IMR-90 (cell line): ENCODE measurements at regions of chr4 and their contacts with region 1.

Region 1: GRCh38 chr4:137531986-137532868 is at the start of gene PCDH18:
- DNase-seq: peak; percentile 98
- ATAC-seq: peak; percentile 83
- H3K4me3 ChIP-seq: peak within 1 kb of the TSS; percentile 62
- H3K27ac ChIP-seq: peak within 1 kb of the TSS; percentile 87
- H3K4me1 ChIP-seq: no peaks in the 10 kb centered on the region; the same call in 1 of the 2 replicates
- H3K27me3 ChIP-seq: no peaks in the 10 kb centered on the region
- CTCF ChIP-seq: no peak
- POLR2A ChIP-seq: peak; percentile 79
- RAD21 ChIP-seq: no peak; the same call in 1 of the 2 replicates
- total RNA-seq, gene PCDH18: 108 and 119 TPM in 2 replicates

Region 2: GRCh38 chr4:137124278-137124932 is 407.8 kb before region 1 on chr4:
- CTCF ChIA-PET with region 1: interaction called, 8 read pairs
- POLR2A ChIA-PET with region 1: no interaction called
- dilution Hi-C with region 1: no loop called
- in situ Hi-C with region 1: loop called (anchors 10 kb)
- intact Hi-C with region 1: loop called (anchors 1 kb)
- DNase-seq: peak; percentile 79
- ATAC-seq: peak; percentile 100
- H3K4me3 ChIP-seq: peak overlapping the region; percentile 44; the same call in 1 of the 2 replicates
- H3K27ac ChIP-seq: no peak overlapping the region
- H3K4me1 ChIP-seq: no peaks in the 10 kb centered on the region
- H3K27me3 ChIP-seq: no peaks in the 10 kb centered on the region
- CTCF ChIP-seq: peak; percentile 79
- POLR2A ChIP-seq: no peak
- RAD21 ChIP-seq: peak; percentile 88

Region 3: GRCh38 chr4:137610960-137611359 is 78.7 kb after region 1 on chr4:
- CTCF ChIA-PET with region 1: no interaction called
- POLR2A ChIA-PET with region 1: interaction called, 9 read pairs
- dilution Hi-C with region 1: no loop called
- in situ Hi-C with region 1: no loop called
- intact Hi-C with region 1: loop called (anchors 1 kb)
- DNase-seq: peak; percentile 19
- ATAC-seq: no peak
- H3K4me3 ChIP-seq: no peak overlapping the region
- H3K27ac ChIP-seq: peak overlapping the region; percentile 47; the same call in 1 of the 2 replicates
- H3K4me1 ChIP-seq: peaks cover 9% of the 10 kb centered on the region
- H3K27me3 ChIP-seq: no peaks in the 10 kb centered on the region
- CTCF ChIP-seq: peak; percentile 32; the same call in 1 of the 2 replicates
- POLR2A ChIP-seq: no peak
- RAD21 ChIP-seq: 0 out of 2 replicates have a peak, but pooled peaks have one; percentile 18

Region 4: DNA sequence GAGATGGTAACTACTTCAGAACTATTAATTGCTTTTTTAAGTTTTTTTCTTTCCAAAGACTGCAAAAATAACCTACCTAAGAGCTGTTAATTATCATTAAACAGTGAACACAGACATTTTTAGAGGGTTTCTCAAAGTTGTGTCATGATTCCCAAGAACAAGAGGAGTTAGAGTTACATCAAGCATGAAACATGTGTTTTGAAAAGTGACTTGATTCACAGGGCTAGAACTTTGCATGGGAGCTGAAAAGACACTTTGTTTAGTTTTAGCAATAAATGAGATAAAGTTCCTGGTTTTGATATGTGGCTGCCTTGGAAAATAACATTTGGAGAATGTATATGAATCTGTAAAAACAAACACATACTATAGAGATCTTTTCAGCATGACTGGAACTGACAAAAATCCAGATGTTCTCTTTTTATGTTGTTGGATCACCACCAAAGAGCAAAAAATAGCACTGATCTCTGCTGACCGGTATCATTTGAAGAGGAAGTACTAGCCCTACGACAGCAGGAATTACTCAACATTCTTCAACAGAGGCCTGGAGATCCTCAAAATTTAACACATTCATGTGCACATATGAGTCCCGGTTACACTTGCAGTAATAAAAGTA is 173.1 kb after region 1 on chr4:
- CTCF ChIA-PET with region 1: interaction called, 3 read pairs
- POLR2A ChIA-PET with region 1: interaction called, 5 read pairs
- dilution Hi-C with region 1: no loop called
- in situ Hi-C with region 1: no loop called
- intact Hi-C with region 1: loop called (anchors 1 kb)
- DNase-seq: peak; percentile 97
- ATAC-seq: peak; percentile 90
- H3K4me3 ChIP-seq: no peak overlapping the region
- H3K27ac ChIP-seq: peak overlapping the region; percentile 93; the same call in 1 of the 2 replicates
- H3K4me1 ChIP-seq: peaks cover 15% of the 10 kb centered on the region
- H3K27me3 ChIP-seq: no peaks in the 10 kb centered on the region
- CTCF ChIP-seq: no peak
- POLR2A ChIP-seq: no peak
- RAD21 ChIP-seq: no peak

Region 5: GRCh38 chr4:137981282-137981681 is 449.1 kb after region 1 on chr4:
- CTCF ChIA-PET with region 1: no interaction called
- POLR2A ChIA-PET with region 1: no interaction called
- dilution Hi-C with region 1: no loop called
- in situ Hi-C with region 1: no loop called
- intact Hi-C with region 1: loop called (anchors 5 kb)
- DNase-seq: peak; percentile 59
- ATAC-seq: peak; percentile 53
- H3K4me3 ChIP-seq: no peak overlapping the region
- H3K27ac ChIP-seq: no peak overlapping the region
- H3K4me1 ChIP-seq: no peaks in the 10 kb centered on the region
- H3K27me3 ChIP-seq: no peaks in the 10 kb centered on the region
- CTCF ChIP-seq: peak; percentile 38
- POLR2A ChIP-seq: no peak
- RAD21 ChIP-seq: peak; percentile 25; the same call in 1 of the 2 replicates

Region 6: DNA sequence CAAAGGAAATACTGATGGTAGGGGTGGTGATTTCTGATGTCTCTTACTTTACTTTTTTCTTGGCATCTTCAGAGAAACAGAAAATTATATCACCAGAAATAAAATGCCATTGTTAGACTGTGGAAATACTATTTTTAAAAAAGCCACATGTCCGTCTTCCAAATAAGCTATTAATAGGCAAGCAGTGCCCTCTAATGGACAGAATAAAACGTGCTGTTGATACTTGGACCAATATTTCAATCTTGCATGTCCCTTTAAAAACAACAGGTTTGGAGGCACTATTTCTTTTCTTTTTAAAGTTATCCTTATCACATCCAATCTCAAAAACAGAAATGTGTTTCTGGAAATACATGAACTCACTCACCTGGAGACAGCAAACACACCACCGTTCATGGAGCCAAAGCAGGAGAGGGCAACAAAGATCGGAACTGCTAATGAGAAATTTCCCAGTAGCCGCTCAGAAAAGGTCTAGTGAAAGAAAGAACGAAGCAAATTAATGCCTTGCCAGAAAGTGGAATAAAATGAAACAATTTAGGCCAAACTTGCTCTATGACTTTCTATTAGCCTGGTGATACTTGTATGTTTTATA is 650.7 kb after region 1 on chr4:
- CTCF ChIA-PET with region 1: no interaction called
- POLR2A ChIA-PET with region 1: no interaction called
- dilution Hi-C with region 1: no loop called
- in situ Hi-C with region 1: loop called (anchors 25 kb)
- intact Hi-C with region 1: loop called (anchors 5 kb)
- DNase-seq: peak; percentile 72
- ATAC-seq: peak; percentile 31; the same call in 1 of the 2 replicates
- H3K4me3 ChIP-seq: no peak overlapping the region
- H3K27ac ChIP-seq: no peak overlapping the region
- H3K4me1 ChIP-seq: peaks cover 4% of the 10 kb centered on the region; the same call in 1 of the 2 replicates
- H3K27me3 ChIP-seq: no peaks in the 10 kb centered on the region
- CTCF ChIP-seq: peak; percentile 76
- POLR2A ChIP-seq: no peak
- RAD21 ChIP-seq: peak; percentile 76